Posterior vena cava (tissue), 2 donors: ENCODE measurements at regions of chr6 and their contacts with region 1.

Region 1: GRCh38 chr6:26204332-26205165 is 117.3 kb downstream of the HFE start:
- DNase-seq: peak; percentile 95

Region 2: DNA sequence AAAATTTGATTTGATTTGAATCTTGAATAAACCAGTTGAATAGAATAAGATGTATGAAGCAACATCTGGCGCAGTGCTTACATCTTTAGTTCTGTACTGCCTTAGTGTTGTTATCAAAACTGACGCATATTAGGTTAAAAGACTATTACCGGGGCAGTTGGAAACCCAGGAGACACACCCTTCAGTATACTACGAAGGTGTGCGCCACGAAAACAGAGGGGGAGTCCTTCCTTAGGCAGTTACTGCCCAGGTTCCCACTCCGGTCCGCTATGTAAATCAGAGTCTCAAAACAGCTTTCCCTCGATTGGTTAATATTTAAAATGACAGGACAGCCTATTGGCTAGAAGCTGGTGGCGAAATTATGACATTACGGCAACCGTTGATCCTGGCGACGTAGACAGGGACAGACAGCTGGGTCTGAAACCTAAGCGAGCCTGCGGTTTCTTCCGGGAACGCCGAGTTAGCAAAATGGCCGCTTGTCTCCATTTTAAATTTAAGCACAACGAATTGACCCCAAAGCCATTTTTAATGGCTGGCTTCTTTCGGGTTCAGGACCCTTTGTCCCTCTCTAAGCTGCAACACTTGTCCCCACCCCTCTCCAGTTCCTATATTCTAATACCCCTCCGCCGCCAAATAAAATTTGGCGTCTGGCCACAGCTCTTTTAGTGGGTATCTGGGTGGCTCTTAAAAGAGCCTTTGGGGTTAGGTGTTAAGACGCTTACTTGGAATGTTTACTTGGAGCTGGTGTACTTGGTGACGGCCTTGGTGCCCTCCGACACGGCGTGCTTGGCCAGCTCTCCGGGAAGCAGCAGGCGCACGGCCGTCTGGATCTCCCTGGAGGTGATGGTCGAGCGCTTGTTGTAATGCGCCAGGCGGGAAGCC is 81.5 kb before region 1 on chr6:
- intact Hi-C with region 1: loop called in 1 of 2 experiments (anchors 10 kb)
- DNase-seq: peak; percentile 95

Region 3: GRCh38 chr6:26175428-26176181 is 28.9 kb before region 1 on chr6:
- intact Hi-C with region 1: no loop called
- DNase-seq: no peak

Region 4: DNA sequence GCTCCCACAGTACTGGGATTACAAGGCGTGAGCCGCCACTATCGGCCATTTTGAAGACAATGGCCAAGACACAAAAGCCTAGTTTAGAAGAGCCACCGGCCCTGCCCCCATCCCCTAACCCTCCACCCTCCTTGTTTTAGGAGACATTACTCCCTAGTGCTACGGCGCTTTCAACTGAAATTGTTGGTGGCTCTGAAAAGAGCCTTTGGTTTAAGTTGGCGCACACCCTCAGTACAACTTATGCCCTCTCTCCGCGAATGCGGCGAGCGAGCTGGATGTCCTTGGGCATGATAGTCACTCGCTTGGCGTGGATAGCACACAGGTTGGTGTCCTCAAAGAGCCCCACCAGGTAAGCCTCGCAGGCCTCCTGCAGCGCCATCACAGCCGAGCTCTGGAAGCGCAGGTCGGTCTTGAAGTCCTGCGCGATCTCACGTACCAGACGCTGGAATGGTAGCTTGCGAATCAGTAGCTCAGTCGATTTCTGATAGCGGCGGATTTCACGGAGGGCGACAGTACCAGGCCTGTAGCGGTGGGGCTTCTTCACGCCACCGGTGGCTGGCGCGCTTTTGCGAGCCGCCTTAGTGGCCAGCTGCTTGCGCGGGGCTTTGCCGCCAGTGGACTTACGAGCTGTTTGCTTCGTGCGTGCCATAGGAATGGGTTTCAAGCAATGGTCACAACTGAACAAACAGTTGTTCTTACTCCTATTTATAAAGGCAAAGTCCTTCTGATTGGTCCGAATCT is 45.6 kb after region 1 on chr6:
- intact Hi-C with region 1: no loop called
- DNase-seq: no peak

Region 5: GRCh38 chr6:26445934-26446667 is 241.6 kb after region 1 on chr6:
- intact Hi-C with region 1: no loop called
- DNase-seq: no peak